ENCODE measurements at regions of chr14 and their contacts with region 1.

Region 1: GRCh38 chr14:23057757-23058653 is 685 bp upstream of the CDH24 start:
- DNase-seq: peak; percentile 93
- ATAC-seq: peak; percentile 81
- H3K4me3 Mint-ChIP-seq: peak overlapping the region; percentile 74
- H3K27ac Mint-ChIP-seq: no peak overlapping the region
- H3K4me1 Mint-ChIP-seq: peaks cover 15% of the 10 kb centered on the region
- H3K27me3 Mint-ChIP-seq: no peaks in the 10 kb centered on the region

Region 2: GRCh38 chr14:22929104-22929847 is 128.7 kb before region 1 on chr14 and contains the start of gene PRMT5:
- CTCF ChIA-PET with region 1: interaction called, 14 read pairs
- POLR2A ChIA-PET with region 1: no interaction called
- intact Hi-C with region 1: loop called in 1 of 2 experiments (anchors 2 kb)
- DNase-seq: peak; percentile 99
- ATAC-seq: peak; percentile 98
- H3K4me3 Mint-ChIP-seq: no peak within 1 kb of the TSS
- H3K27ac Mint-ChIP-seq: no peak within 1 kb of the TSS
- H3K4me1 Mint-ChIP-seq: peaks cover 39% of the 10 kb centered on the region
- H3K27me3 Mint-ChIP-seq: no peaks in the 10 kb centered on the region
- total RNA-seq, gene PRMT5: 121 to 151 TPM

Region 3: GRCh38 chr14:22994762-22995275 is 63.2 kb before region 1 on chr14:
- CTCF ChIA-PET with region 1: interaction called, 751 read pairs
- POLR2A ChIA-PET with region 1: interaction called, 4 read pairs
- intact Hi-C with region 1: loop called (anchors 1 to 2 kb)
- DNase-seq: peak; percentile 59
- ATAC-seq: peak; percentile 78
- H3K4me3 Mint-ChIP-seq: no peak overlapping the region
- H3K27ac Mint-ChIP-seq: no peak overlapping the region
- H3K4me1 Mint-ChIP-seq: no peaks in the 10 kb centered on the region
- H3K27me3 Mint-ChIP-seq: no peaks in the 10 kb centered on the region

Region 4: DNA sequence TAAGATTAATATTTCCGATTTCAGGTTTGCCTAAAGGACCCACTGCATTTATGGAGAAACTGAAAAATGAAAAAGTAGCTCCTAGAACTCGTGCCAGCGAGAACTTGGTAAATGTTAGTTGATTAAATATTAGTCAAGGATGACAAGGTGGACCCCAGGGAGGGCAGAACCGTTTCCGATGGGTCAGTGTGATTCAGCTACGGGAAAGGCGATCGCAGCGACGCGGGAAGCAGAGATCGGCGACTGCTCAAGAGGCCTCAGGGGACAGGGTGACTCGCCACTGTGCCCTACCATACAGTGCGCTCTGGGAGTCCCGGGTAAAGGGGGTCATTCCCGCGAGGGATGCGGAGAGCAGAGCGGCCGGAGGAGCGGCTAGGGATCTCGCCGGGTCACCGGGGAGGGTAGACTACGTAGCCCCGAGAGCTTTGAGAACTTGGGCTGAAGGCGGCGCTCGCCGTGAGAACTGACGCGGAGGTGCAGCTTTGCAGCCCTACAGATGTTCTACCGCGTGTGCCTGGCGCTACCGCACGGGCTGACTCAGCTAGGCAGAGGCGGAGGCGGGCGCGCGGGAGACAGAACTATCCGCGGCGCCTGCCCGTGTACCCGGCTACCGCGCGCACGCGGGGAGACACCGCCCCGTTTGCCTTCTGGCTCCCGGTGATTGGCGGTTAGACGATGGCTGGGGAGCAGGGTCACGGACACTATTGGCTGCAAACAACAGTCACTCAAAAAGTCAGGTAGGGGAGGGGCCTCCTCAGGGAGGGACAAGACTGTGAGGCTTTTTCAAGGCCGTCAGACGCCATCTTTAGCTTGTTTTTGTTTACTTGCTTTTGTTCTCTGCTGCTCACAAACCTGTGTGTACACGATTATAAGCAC is 51.2 kb before region 1 on chr14:
- CTCF ChIA-PET with region 1: interaction called, 61 read pairs
- POLR2A ChIA-PET with region 1: interaction called, 4 read pairs
- intact Hi-C with region 1: loop called (anchors 1 to 5 kb)
- DNase-seq: peak; percentile 98
- ATAC-seq: peak; percentile 98
- H3K4me3 Mint-ChIP-seq: peak overlapping the region; percentile 95
- H3K27ac Mint-ChIP-seq: peak overlapping the region; percentile 99
- H3K4me1 Mint-ChIP-seq: peaks cover 45% of the 10 kb centered on the region
- H3K27me3 Mint-ChIP-seq: no peaks in the 10 kb centered on the region

Region 5: GRCh38 chr14:23034483-23035302 is 23.3 kb before region 1 on chr14 and contains the start of gene PSMB5:
- CTCF ChIA-PET with region 1: interaction called, 15 read pairs
- POLR2A ChIA-PET with region 1: no interaction called
- intact Hi-C with region 1: loop called in 1 of 2 experiments (anchors 1 kb)
- DNase-seq: peak; percentile 94
- ATAC-seq: peak; percentile 95
- H3K4me3 Mint-ChIP-seq: peak within 1 kb of the TSS; percentile 97
- H3K27ac Mint-ChIP-seq: peak within 1 kb of the TSS; percentile 97
- H3K4me1 Mint-ChIP-seq: peaks cover 36% of the 10 kb centered on the region
- H3K27me3 Mint-ChIP-seq: no peaks in the 10 kb centered on the region
- total RNA-seq, gene PSMB5: 104 to 129 TPM

Region 6: DNA sequence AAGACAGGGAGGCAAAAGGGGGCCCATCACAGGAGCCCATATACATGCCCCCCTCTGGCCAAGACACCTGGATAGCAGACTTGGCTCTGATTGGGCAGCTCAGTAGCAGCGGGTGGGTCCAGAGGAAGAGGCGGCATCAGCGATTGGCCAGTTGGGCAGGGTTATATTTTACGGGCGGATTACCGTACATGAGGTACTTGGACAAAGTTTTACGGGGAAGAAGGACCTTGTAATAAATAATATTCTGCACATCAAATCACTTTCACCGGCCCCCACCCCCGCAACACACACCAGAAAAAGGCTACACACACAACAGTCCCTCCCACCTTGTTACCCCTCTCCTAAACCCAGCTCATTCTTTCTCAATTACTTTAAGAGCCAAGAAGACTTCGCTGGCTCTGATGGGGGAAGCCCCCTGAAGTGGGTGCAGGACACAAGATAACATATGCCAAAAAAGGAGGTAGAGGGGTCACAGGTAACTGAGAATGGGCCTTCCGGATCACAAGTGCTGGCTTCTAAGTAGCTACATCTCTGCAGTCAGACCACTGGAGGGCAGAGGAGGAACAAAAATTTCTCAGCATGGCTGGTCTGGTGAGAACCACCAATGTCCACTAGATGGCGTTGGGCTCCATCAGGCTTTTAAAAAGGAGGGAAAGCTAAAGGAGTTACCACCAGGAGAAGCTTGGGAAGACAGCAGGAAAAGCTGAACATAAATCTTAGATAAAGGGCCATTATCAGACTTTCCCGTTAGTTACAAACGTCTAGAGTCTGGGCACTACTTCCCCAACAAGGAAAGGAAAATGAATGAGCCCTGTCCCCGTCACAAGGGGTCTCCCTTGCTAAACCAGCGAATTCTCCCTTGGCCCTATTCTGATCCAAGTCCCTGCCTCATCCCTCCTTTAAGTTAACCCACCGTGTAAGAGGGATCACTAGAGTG is 10.7 kb after region 1 on chr14:
- CTCF ChIA-PET with region 1: interaction called, 63 read pairs
- POLR2A ChIA-PET with region 1: interaction called, 3 read pairs
- intact Hi-C with region 1: no loop called
- DNase-seq: peak; percentile 84
- ATAC-seq: peak; percentile 79
- H3K4me3 Mint-ChIP-seq: peak overlapping the region; percentile 5
- H3K27ac Mint-ChIP-seq: peak overlapping the region; percentile 80
- H3K4me1 Mint-ChIP-seq: peaks cover 37% of the 10 kb centered on the region
- H3K27me3 Mint-ChIP-seq: no peaks in the 10 kb centered on the region

Region 7: GRCh38 chr14:23512156-23512555 is 454.2 kb after region 1 on chr14:
- CTCF ChIA-PET with region 1: no interaction called
- POLR2A ChIA-PET with region 1: no interaction called
- intact Hi-C with region 1: no loop called
- DNase-seq: peak; percentile 44
- ATAC-seq: peak; percentile 44
- H3K4me3 Mint-ChIP-seq: peak overlapping the region; percentile 59
- H3K27ac Mint-ChIP-seq: peak overlapping the region; percentile 77
- H3K4me1 Mint-ChIP-seq: peaks cover 8% of the 10 kb centered on the region
- H3K27me3 Mint-ChIP-seq: no peaks in the 10 kb centered on the region

Region 8: GRCh38 chr14:23804817-23805216 is 746.8 kb after region 1 on chr14:
- CTCF ChIA-PET with region 1: no interaction called
- POLR2A ChIA-PET with region 1: no interaction called
- intact Hi-C with region 1: no loop called
- DNase-seq: no peak
- ATAC-seq: no peak
- H3K4me3 Mint-ChIP-seq: no peak overlapping the region
- H3K27ac Mint-ChIP-seq: no peak overlapping the region
- H3K4me1 Mint-ChIP-seq: no peaks in the 10 kb centered on the region
- H3K27me3 Mint-ChIP-seq: peaks cover 14% of the 10 kb centered on the region

Measured in activated CD4-positive, alpha-beta T cell treated with anti-CD3 and anti-CD28 coated beads for 36 hours (primary cell).